IMR-90 (cell line): ENCODE measurements at regions of chrX and their contacts with region 1.

Region 1: DNA sequence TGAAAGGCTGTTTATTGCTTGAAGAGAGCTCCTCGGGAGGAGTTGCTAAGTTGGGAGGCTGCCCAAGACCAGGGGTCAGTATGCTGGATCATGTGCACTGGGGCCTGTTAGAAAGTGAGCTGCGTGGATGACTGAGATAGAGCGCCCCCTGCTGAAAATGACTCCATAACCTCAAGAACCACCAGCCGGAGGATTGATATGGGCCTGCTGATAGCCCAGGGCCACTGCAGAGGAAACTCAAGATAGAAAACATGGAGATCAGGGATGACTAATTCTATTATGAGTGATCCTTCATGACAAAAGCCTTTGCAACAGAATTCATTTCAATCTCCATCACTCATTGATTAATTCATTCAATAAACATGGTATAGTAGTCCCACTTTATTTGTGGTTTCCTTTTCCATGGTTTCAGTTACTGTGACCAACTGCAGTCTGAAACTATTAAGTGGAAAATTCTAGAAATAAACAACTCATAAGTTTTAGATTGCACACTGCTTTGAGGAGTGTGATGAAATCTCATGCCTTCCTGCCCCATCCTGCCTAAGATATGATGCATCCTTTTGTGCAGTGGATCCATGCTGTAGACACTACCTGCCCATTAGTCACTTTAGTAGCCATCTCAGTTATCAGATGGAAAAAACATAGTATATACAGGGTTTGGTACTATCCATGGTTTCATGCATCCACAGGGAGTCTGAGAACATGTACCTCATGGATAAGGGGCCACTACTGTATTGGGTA is 126.7 kb upstream of the MBNL3 start:
- DNase-seq: peak; percentile 12
- ATAC-seq: 0 out of 2 replicates have a peak, but pooled peaks have one; percentile 42
- H3K4me3 ChIP-seq: no peak overlapping the region
- H3K27ac ChIP-seq: no peak overlapping the region
- H3K4me1 ChIP-seq: no peaks in the 10 kb centered on the region
- H3K27me3 ChIP-seq: peaks cover 5% of the 10 kb centered on the region
- CTCF ChIP-seq: peak; percentile 43
- POLR2A ChIP-seq: no peak
- RAD21 ChIP-seq: no peak

Region 2: DNA sequence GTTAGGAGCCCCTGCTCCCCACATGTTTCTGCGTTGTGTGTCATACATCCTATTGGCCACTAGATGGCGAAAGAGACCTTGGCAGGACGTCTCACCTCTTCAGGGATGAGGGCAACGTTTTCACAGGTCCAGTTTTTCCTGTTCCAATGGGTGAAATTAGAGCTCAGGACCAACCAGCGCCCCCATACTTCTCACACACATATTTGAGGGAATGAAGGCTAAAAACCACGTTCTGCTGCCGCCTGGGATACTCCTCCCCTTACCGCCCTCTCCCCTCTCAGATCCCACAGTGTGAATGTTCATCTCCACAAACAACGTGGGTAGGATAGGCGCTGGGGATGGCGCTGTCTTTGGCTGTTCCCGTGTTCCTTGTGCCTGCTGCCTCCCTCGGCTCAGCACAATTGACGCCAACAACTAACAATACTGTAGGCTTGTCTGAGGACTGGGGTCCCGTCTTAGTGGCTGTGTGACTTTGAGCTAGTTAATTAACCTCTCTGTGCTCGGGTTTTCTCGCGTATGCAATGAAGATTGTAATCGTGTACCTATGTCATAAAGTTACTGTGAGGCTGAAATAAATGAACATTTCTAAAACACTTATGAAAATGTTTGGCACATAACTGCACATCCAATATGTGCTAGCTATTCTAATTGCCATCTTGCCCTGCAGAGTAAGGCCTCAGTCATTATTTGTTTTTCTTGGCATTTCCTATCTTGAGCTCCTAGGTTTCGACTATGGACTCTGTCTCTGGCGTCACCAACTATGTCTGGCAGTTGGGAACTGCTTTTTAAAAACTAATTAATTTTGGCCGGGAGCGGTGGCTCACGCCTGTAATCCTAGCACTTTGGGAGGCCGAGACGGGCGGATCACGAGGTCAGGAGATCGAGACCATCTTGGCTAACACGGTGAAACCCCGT is 773.8 kb before region 1 on chrX:
- CTCF ChIA-PET with region 1: interaction called, 3 read pairs
- POLR2A ChIA-PET with region 1: no interaction called
- dilution Hi-C with region 1: no loop called
- in situ Hi-C with region 1: no loop called
- intact Hi-C with region 1: loop called (anchors 5 kb)
- DNase-seq: peak; percentile 38
- ATAC-seq: peak; percentile 88
- H3K4me3 ChIP-seq: no peak overlapping the region
- H3K27ac ChIP-seq: no peak overlapping the region
- H3K4me1 ChIP-seq: no peaks in the 10 kb centered on the region
- H3K27me3 ChIP-seq: peaks cover 8% of the 10 kb centered on the region
- CTCF ChIP-seq: peak; percentile 68
- POLR2A ChIP-seq: no peak
- RAD21 ChIP-seq: peak; percentile 73

Region 3: GRCh38 chrX:132092439-132093065 is 523.0 kb before region 1 on chrX:
- CTCF ChIA-PET with region 1: interaction called, 5 read pairs
- POLR2A ChIA-PET with region 1: no interaction called
- dilution Hi-C with region 1: no loop called
- in situ Hi-C with region 1: no loop called
- intact Hi-C with region 1: loop called (anchors 1 kb)
- DNase-seq: peak; percentile 61
- ATAC-seq: peak; percentile 94
- H3K4me3 ChIP-seq: no peak overlapping the region
- H3K27ac ChIP-seq: no peak overlapping the region
- H3K4me1 ChIP-seq: no peaks in the 10 kb centered on the region
- H3K27me3 ChIP-seq: peaks cover 11% of the 10 kb centered on the region
- CTCF ChIP-seq: peak; percentile 67
- POLR2A ChIP-seq: no peak
- RAD21 ChIP-seq: peak; percentile 62

Region 4: DNA sequence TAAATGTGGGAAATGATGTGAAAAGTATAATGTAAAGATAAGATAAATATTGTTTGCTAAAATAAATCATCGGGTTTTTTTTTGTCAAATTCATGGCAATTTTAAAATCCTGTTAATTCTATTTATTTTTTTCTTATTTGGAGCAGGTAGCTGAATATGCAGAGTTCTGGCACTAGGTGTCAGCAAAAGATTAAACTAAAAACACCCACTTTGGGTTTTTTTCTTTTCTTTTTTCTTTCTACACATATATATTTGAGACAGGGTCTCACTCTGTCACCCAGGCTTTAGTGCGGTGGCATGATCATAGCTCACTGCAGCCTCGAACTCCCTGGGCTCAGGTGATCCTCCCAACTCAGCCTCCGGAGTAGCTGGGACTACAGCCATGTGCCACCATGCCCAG is 389.4 kb before region 1 on chrX:
- CTCF ChIA-PET with region 1: interaction called, 3 read pairs
- POLR2A ChIA-PET with region 1: no interaction called
- dilution Hi-C with region 1: no loop called
- in situ Hi-C with region 1: no loop called
- intact Hi-C with region 1: loop called (anchors 1 kb)
- DNase-seq: peak; percentile 15
- ATAC-seq: no peak
- H3K4me3 ChIP-seq: no peak overlapping the region
- H3K27ac ChIP-seq: no peak overlapping the region
- H3K4me1 ChIP-seq: peaks cover 2% of the 10 kb centered on the region; the same call in 1 of the 2 replicates
- H3K27me3 ChIP-seq: peaks cover 4% of the 10 kb centered on the region; the same call in 1 of the 2 replicates
- CTCF ChIP-seq: peak; percentile 55
- POLR2A ChIP-seq: no peak
- RAD21 ChIP-seq: peak; percentile 47

Region 5: DNA sequence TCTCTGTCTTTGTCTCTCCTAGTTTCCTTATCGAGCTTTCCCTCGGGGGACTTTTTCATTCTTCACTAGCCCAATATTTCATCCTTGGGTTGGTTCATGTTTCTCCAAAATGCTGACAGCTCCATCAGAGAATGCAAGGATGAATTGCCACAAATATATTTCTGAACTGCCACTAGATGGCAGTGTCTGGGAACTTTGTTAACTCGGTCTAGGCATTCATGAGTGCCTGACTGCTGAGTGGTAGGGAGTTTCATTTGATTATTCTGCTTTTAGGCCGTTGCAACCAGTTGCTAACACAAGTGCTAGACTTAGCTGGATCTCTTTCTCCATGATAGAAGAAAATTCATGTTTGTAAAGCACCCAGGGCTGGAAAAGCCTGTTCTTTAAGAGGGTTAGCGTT is 322.8 kb before region 1 on chrX:
- CTCF ChIA-PET with region 1: interaction called, 4 read pairs
- POLR2A ChIA-PET with region 1: no interaction called
- dilution Hi-C with region 1: no loop called
- in situ Hi-C with region 1: no loop called
- intact Hi-C with region 1: loop called (anchors 1 kb)
- DNase-seq: peak; percentile 57
- ATAC-seq: peak; percentile 83
- H3K4me3 ChIP-seq: no peak overlapping the region
- H3K27ac ChIP-seq: no peak overlapping the region
- H3K4me1 ChIP-seq: no peaks in the 10 kb centered on the region
- H3K27me3 ChIP-seq: peaks cover 1% of the 10 kb centered on the region; the same call in 1 of the 2 replicates
- CTCF ChIP-seq: peak; percentile 66
- POLR2A ChIP-seq: no peak
- RAD21 ChIP-seq: peak; percentile 56

Region 6: GRCh38 chrX:132520213-132520612 is 95.3 kb before region 1 on chrX:
- CTCF ChIA-PET with region 1: no interaction called
- POLR2A ChIA-PET with region 1: no interaction called
- dilution Hi-C with region 1: no loop called
- in situ Hi-C with region 1: no loop called
- intact Hi-C with region 1: no loop called
- DNase-seq: no peak
- ATAC-seq: no peak
- H3K4me3 ChIP-seq: no peak overlapping the region
- H3K27ac ChIP-seq: no peak overlapping the region
- H3K4me1 ChIP-seq: no peaks in the 10 kb centered on the region
- H3K27me3 ChIP-seq: no peaks in the 10 kb centered on the region
- CTCF ChIP-seq: no peak
- POLR2A ChIP-seq: no peak
- RAD21 ChIP-seq: no peak

Region 7: DNA sequence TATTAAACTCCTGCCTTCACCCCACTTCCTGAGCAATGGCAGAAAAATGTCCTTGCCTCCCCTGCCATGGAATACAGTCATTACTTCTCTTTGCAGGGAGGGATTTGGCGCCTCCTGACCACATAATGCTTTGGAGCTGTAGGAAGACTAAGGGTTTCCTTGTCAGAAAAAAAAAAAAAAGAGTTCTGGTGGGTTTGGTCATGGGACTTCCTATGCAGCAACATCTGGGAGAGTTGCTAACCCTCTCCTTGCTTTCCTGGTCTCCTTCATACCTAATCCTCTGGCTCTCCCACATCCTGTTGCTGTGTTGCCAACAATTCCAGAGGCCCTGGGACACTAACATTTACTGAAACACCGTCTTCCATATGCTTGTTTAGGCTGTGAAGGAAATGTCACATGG is 51.6 kb before region 1 on chrX:
- CTCF ChIA-PET with region 1: no interaction called
- POLR2A ChIA-PET with region 1: no interaction called
- dilution Hi-C with region 1: no loop called
- in situ Hi-C with region 1: no loop called
- intact Hi-C with region 1: no loop called
- DNase-seq: no peak
- ATAC-seq: no peak
- H3K4me3 ChIP-seq: no peak overlapping the region
- H3K27ac ChIP-seq: no peak overlapping the region
- H3K4me1 ChIP-seq: no peaks in the 10 kb centered on the region
- H3K27me3 ChIP-seq: no peaks in the 10 kb centered on the region
- CTCF ChIP-seq: no peak
- POLR2A ChIP-seq: no peak
- RAD21 ChIP-seq: no peak